Activated T-helper 1 cell treated with anti-CD3 and anti-CD28 coated beads, Interleukin-12 subunit alpha, Interleukin-12 subunit beta, Interleukin-2, Interleukin-4 antibody, amounts not matched to agents 30 ng/mL and 10 ng/mL and 1 ng/mL, durations not matched to agents 14 hours and 24 hours and 36 hours (primary cell): ENCODE measurements at regions of chr11 and their contacts with region 1.

Region 1: GRCh38 chr11:123640677-123641494 is 13.5 kb downstream of the SCN3B start:
- DNase-seq: peak; percentile 29
- H3K4me3 Mint-ChIP-seq: no peak overlapping the region
- H3K27ac Mint-ChIP-seq: no peak overlapping the region
- H3K4me1 Mint-ChIP-seq: no peaks in the 10 kb centered on the region
- H3K27me3 Mint-ChIP-seq: peaks cover 3% of the 10 kb centered on the region

Region 2: DNA sequence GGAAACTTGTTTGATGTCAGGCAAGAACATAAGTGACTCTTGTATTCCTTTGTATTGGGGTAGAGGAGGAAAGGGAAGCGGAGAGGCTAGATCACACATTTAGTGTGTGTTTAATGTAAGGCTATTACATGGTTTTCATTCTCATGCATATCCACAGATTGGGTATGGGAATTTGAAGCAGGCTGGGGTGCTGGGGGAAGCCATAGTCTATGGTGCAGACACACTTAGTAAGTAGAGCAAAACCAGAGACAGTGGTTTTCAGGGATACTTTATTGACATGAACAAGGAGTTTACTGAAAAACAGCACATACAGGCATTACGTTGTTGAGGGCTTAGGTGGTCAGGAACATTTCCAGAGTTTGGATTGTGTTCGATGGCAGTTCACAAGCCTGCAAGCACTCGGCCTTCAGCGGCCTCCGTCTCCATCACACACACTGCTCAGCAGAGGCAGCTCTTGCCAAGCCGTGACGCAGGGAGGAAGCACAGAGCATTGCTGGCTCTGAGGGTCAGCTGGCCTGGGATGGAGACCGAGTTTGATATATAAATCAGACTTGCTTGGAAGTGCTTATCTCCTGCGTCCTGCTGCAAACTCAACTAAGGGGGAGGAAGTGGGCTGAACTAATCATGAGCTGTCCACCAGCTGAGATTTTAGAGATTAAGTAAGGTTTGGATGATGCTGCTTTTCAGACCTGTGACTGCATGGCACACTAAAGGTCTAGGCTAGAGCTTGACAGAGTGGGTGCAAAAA is 11.8 kb before region 1 on chr11:
- intact Hi-C with region 1: no loop called
- DNase-seq: no peak
- H3K4me3 Mint-ChIP-seq: no peak overlapping the region
- H3K27ac Mint-ChIP-seq: peak overlapping the region; percentile 10
- H3K4me1 Mint-ChIP-seq: no peaks in the 10 kb centered on the region
- H3K27me3 Mint-ChIP-seq: peaks cover 2% of the 10 kb centered on the region

Region 3: GRCh38 chr11:123707606-123708205 is 66.8 kb after region 1 on chr11:
- intact Hi-C with region 1: loop called (anchors 1 kb)
- DNase-seq: peak; percentile 38
- H3K4me3 Mint-ChIP-seq: no peak overlapping the region
- H3K27ac Mint-ChIP-seq: no peak overlapping the region
- H3K4me1 Mint-ChIP-seq: no peaks in the 10 kb centered on the region
- H3K27me3 Mint-ChIP-seq: peaks cover 20% of the 10 kb centered on the region

Region 4: GRCh38 chr11:123753110-123753509 is 112.2 kb after region 1 on chr11:
- intact Hi-C with region 1: no loop called
- DNase-seq: no peak
- H3K4me3 Mint-ChIP-seq: peak overlapping the region; percentile 29
- H3K27ac Mint-ChIP-seq: peak overlapping the region; percentile 45
- H3K4me1 Mint-ChIP-seq: peaks cover 61% of the 10 kb centered on the region
- H3K27me3 Mint-ChIP-seq: peaks cover 14% of the 10 kb centered on the region

Region 5: GRCh38 chr11:124194698-124195410 is 554.0 kb after region 1 on chr11:
- intact Hi-C with region 1: loop called (anchors 10 kb)
- DNase-seq: peak; percentile 22
- H3K4me3 Mint-ChIP-seq: no peak overlapping the region
- H3K27ac Mint-ChIP-seq: no peak overlapping the region
- H3K4me1 Mint-ChIP-seq: no peaks in the 10 kb centered on the region
- H3K27me3 Mint-ChIP-seq: peaks cover 11% of the 10 kb centered on the region